ENCODE measurements at regions of chr11 and their contacts with region 1.

Region 1: GRCh38 chr11:74748211-74749127 is at the start of gene RNF169:
- DNase-seq: peak; percentile 97
- H3K4me3 ChIP-seq: peak within 1 kb of the TSS; percentile 65
- H3K27ac ChIP-seq: peak within 1 kb of the TSS; percentile 83
- H3K27me3 ChIP-seq: no peaks in the 10 kb centered on the region
- CTCF ChIP-seq: no peak

Region 2: DNA sequence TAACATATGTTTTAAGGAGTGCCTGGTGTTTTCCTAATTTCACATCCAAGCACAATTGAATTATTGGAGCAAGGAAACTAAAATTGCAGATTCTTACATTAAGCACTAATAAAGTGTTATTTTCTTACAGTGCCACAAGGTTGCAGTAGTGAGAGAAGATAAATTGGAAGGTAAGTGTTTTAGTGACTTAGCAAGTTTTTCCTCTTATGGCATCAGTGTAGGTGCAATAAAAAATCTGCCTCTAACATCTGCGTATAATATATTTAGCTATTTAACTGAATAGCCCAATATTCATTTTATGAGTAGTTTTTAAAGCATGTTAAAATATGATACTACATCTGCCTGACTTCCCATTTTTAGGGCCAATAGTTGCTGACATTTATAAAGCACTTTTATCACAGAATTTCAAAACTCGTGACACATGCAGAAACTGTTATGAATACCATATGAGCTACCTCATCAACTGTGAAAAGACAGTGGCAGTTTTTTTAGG is 137.1 kb before region 1 on chr11:
- in situ Hi-C with region 1: loop called (anchors 25 kb)
- DNase-seq: no peak
- H3K4me3 ChIP-seq: no peak overlapping the region
- H3K27ac ChIP-seq: peak overlapping the region; percentile 30
- H3K27me3 ChIP-seq: no peaks in the 10 kb centered on the region
- CTCF ChIP-seq: peak; percentile 37